ENCODE measurements at regions of chr6 and their contacts with region 1.

Region 1: DNA sequence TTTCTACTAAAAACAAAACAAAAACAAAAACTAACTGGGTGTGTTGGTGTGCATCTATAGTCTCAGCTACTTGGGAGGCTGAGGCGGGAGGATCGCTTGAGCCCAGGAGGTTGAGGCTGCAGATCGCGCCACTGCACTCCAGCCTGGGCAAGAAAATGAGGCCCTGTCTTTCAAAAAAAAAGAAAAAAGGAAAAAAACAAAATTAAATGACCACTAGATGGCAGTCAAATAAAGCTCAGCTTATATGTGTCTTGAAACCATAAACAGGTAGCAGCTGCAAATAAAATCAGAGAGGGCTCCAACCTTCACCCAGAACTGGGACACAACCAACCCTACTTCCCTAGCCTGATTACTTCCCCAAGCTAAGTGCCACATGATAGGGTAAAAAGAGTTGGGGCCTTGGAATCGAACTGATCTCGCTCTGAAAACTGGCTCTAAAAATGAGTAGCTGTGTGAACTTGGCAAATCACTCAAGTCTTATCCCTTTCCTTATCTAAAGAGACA is 67.1 kb upstream of the ADGRF4 start:
- DNase-seq: peak; percentile 42 to 65 (median 48)
- ATAC-seq: peak; percentile 84
- H3K4me3 ChIP-seq: no peak overlapping the region
- H3K27ac ChIP-seq: no peak overlapping the region
- H3K4me1 ChIP-seq: peaks cover 0 to 4% of the 10 kb centered on the region in 2 experiments; a peak in 2 of 5 replicates
- H3K27me3 ChIP-seq: no peaks in the 10 kb centered on the region
- CTCF ChIP-seq: peak; percentile 57 to 88 (median 61); a peak in 5 of 6 replicates
- EP300 ChIP-seq: no peak
- POLR2A ChIP-seq: no peak
- RAD21 ChIP-seq: peak; percentile 79 to 80

Region 2: DNA sequence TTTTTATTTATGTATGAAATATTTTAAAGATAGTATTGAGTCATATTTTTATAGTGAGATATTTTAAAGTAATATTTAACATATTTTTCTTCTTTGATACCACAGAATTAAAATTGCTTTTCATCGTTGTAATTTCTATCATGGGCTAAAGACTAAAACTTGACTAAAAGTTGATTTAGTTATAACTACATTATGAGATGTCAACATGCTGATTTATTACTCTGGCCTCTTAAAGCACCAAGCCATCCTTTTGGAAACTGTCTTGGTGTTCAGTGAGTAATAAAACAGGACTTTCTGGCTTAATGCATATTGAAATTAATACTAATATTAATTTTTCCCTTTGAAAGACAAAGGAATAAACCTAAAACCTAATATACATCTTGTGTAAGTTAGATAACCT is 28.1 kb before region 1 on chr6:
- CTCF ChIA-PET with region 1: no interaction called
- POLR2A ChIA-PET with region 1: no interaction called
- in situ Hi-C with region 1: no loop called
- intact Hi-C with region 1: no loop called
- DNase-seq: no peak
- ATAC-seq: no peak
- H3K4me3 ChIP-seq: no peak overlapping the region
- H3K27ac ChIP-seq: no peak overlapping the region
- H3K4me1 ChIP-seq: no peaks in the 10 kb centered on the region
- H3K27me3 ChIP-seq: no peaks in the 10 kb centered on the region
- CTCF ChIP-seq: no peak
- EP300 ChIP-seq: no peak
- POLR2A ChIP-seq: no peak
- RAD21 ChIP-seq: no peak

Region 3: GRCh38 chr6:47733879-47734558 is 102.7 kb after region 1 on chr6:
- CTCF ChIA-PET with region 1: interaction called, 19 read pairs
- POLR2A ChIA-PET with region 1: interaction called, 3 read pairs
- in situ Hi-C with region 1: no loop called
- intact Hi-C with region 1: loop called (anchors 1 kb)
- DNase-seq: peak in 2 of 4 experiments; percentile 20 to 50
- ATAC-seq: peak; percentile 83
- H3K4me3 ChIP-seq: no peak overlapping the region
- H3K27ac ChIP-seq: no peak overlapping the region
- H3K4me1 ChIP-seq: no peaks in the 10 kb centered on the region
- H3K27me3 ChIP-seq: no peaks in the 10 kb centered on the region
- CTCF ChIP-seq: peak; percentile 20 to 65 (median 50); a peak in 5 of 6 replicates
- EP300 ChIP-seq: no peak
- POLR2A ChIP-seq: no peak
- RAD21 ChIP-seq: peak; percentile 79 to 88

Region 4: DNA sequence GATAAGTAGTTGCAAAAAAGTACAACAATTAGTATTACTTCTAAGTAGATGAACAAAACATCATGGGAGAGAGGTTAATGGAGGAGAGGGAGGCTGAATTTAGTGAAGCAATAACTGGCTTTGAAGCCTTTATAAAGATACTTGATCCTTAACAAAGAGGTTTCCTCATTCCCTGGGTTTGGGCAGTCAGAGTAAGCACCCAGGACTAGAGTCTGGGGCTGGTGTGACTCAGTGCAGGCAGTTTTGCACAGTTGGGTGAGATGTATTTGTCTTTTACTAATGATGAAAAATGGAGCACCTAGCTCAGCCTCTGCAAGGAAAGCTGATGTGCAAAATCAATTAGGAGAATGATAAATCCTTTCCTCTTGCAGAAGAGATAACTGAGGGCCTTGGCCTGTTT is 138.7 kb after region 1 on chr6:
- CTCF ChIA-PET with region 1: no interaction called
- POLR2A ChIA-PET with region 1: no interaction called
- in situ Hi-C with region 1: loop called (anchors 10 kb)
- intact Hi-C with region 1: no loop called
- DNase-seq: no peak
- ATAC-seq: no peak
- H3K4me3 ChIP-seq: no peak overlapping the region
- H3K27ac ChIP-seq: no peak overlapping the region
- H3K4me1 ChIP-seq: no peaks in the 10 kb centered on the region
- H3K27me3 ChIP-seq: no peaks in the 10 kb centered on the region
- CTCF ChIP-seq: no peak
- EP300 ChIP-seq: no peak
- POLR2A ChIP-seq: no peak
- RAD21 ChIP-seq: no peak

Region 5: GRCh38 chr6:47780510-47781356 is 149.4 kb after region 1 on chr6:
- CTCF ChIA-PET with region 1: interaction called, 13 read pairs
- POLR2A ChIA-PET with region 1: no interaction called
- in situ Hi-C with region 1: loop called (anchors 10 kb)
- intact Hi-C with region 1: loop called (anchors 1 kb)
- DNase-seq: peak in 3 of 4 experiments; percentile 16 to 56 (median 42)
- ATAC-seq: peak; percentile 91
- H3K4me3 ChIP-seq: no peak overlapping the region
- H3K27ac ChIP-seq: no peak overlapping the region
- H3K4me1 ChIP-seq: no peaks in the 10 kb centered on the region
- H3K27me3 ChIP-seq: no peaks in the 10 kb centered on the region
- CTCF ChIP-seq: peak; percentile 65 to 79 (median 73)
- EP300 ChIP-seq: no peak
- POLR2A ChIP-seq: no peak
- RAD21 ChIP-seq: peak; percentile 79 to 87

Measured in K562 (cell line).